ENCODE measurements at regions of chrX and their contacts with region 1.

Region 1: GRCh38 chrX:101931488-101932248 is at the start of gene ZMAT1:
- DNase-seq: peak; percentile 85 to 94 (median 89)
- H3K4me3 ChIP-seq: peak within 1 kb of the TSS in 1 of 2 donors; percentile 45
- H3K4me3 Mint-ChIP-seq: peak within 1 kb of the TSS; percentile 81 to 93 (median 88)
- H3K27ac ChIP-seq: peak within 1 kb of the TSS; percentile 66
- H3K27ac Mint-ChIP-seq: peak within 1 kb of the TSS; percentile 94 to 99 (median 95)
- H3K4me1 ChIP-seq: peaks cover 8% of the 10 kb centered on the region
- H3K4me1 Mint-ChIP-seq: peaks cover 6 to 18% (median 16%) of the 10 kb centered on the region in 4 donors
- H3K27me3 ChIP-seq: no peaks in the 10 kb centered on the region
- H3K27me3 Mint-ChIP-seq: peaks cover 0 to 2% of the 10 kb centered on the region in 2 donors
- total RNA-seq, gene ZMAT1: 39.1 to 40.0 TPM

Region 2: GRCh38 chrX:101390664-101391525 is 540.8 kb before region 1 on chrX and contains the start of gene RPL36A:
- CTCF ChIA-PET with region 1: no interaction called
- POLR2A ChIA-PET with region 1: interaction called, 18 read pairs
- intact Hi-C with region 1: loop called (anchors 5 kb)
- DNase-seq: peak; percentile 72 to 84 (median 76)
- H3K4me3 ChIP-seq: peak within 1 kb of the TSS; percentile 47 to 82
- H3K4me3 Mint-ChIP-seq: peak within 1 kb of the TSS; percentile 88 to 98 (median 93)
- H3K27ac ChIP-seq: peak within 1 kb of the TSS; percentile 68
- H3K27ac Mint-ChIP-seq: peak within 1 kb of the TSS; percentile 89 to 98 (median 96)
- H3K4me1 ChIP-seq: peaks cover 15% of the 10 kb centered on the region
- H3K4me1 Mint-ChIP-seq: peaks cover 10 to 39% (median 15%) of the 10 kb centered on the region in 4 donors
- H3K27me3 ChIP-seq: no peaks in the 10 kb centered on the region
- H3K27me3 Mint-ChIP-seq: no peaks in the 10 kb centered on the region
- total RNA-seq, gene RPL36A: 380 to 428 TPM

Region 3: GRCh38 chrX:101415180-101416145 is 516.2 kb before region 1 on chrX:
- CTCF ChIA-PET with region 1: no interaction called
- POLR2A ChIA-PET with region 1: interaction called, 15 read pairs
- intact Hi-C with region 1: no loop called
- DNase-seq: peak; percentile 50 to 70 (median 69)
- H3K4me3 ChIP-seq: no peak overlapping the region
- H3K4me3 Mint-ChIP-seq: peak overlapping the region; percentile 1 to 80 (median 56)
- H3K27ac ChIP-seq: peak overlapping the region; percentile 42
- H3K27ac Mint-ChIP-seq: peak overlapping the region; percentile 78 to 92 (median 82)
- H3K4me1 ChIP-seq: peaks cover 35% of the 10 kb centered on the region
- H3K4me1 Mint-ChIP-seq: peaks cover 20 to 60% (median 37%) of the 10 kb centered on the region in 4 donors
- H3K27me3 ChIP-seq: no peaks in the 10 kb centered on the region
- H3K27me3 Mint-ChIP-seq: no peaks in the 10 kb centered on the region

Region 4: GRCh38 chrX:101530944-101531343 is 400.7 kb before region 1 on chrX:
- CTCF ChIA-PET with region 1: no interaction called
- POLR2A ChIA-PET with region 1: no interaction called
- intact Hi-C with region 1: no loop called
- DNase-seq: no peak
- H3K4me3 ChIP-seq: no peak overlapping the region
- H3K4me3 Mint-ChIP-seq: no peak overlapping the region
- H3K27ac ChIP-seq: no peak overlapping the region
- H3K27ac Mint-ChIP-seq: no peak overlapping the region
- H3K4me1 ChIP-seq: no peaks in the 10 kb centered on the region
- H3K4me1 Mint-ChIP-seq: no peaks in the 10 kb centered on the region
- H3K27me3 ChIP-seq: no peaks in the 10 kb centered on the region
- H3K27me3 Mint-ChIP-seq: no peaks in the 10 kb centered on the region

Region 5: DNA sequence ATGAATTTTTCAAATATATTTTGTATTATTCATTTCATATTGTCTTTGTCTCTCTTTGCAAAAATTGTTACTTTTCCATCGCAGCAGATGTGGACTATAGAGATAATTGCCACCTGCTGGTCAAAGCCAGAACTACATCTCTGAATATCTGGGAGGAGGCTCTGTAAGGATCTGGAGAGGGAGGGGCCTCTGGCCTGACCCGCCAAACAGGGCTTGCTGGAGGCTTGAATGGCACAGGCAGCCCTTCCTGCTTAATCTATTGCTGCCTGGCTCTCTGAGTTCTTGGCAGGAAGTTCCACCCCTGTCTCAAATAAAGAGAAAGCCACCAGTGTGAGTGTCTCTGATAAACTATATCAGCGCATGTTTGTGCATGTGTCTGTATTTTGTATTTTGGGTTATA is 132.3 kb before region 1 on chrX:
- CTCF ChIA-PET with region 1: no interaction called
- POLR2A ChIA-PET with region 1: no interaction called
- intact Hi-C with region 1: loop called (anchors 2 kb)
- DNase-seq: peak; percentile 78 to 87 (median 82)
- H3K4me3 ChIP-seq: no peak overlapping the region
- H3K4me3 Mint-ChIP-seq: peak overlapping the region in 5 of 8 donors; percentile 2 to 69 (median 65)
- H3K27ac ChIP-seq: no peak overlapping the region
- H3K27ac Mint-ChIP-seq: peak overlapping the region in 3 of 7 donors; percentile 35 to 54 (median 49)
- H3K4me1 ChIP-seq: no peaks in the 10 kb centered on the region
- H3K4me1 Mint-ChIP-seq: peaks cover 1 to 9% (median 6%) of the 10 kb centered on the region in 4 donors
- H3K27me3 ChIP-seq: no peaks in the 10 kb centered on the region
- H3K27me3 Mint-ChIP-seq: peaks cover 0 to 2% of the 10 kb centered on the region in 2 donors

Region 6: GRCh38 chrX:102155806-102156179 is 224.1 kb after region 1 on chrX and contains the start of gene BEX5:
- CTCF ChIA-PET with region 1: no interaction called
- POLR2A ChIA-PET with region 1: interaction called, 12 read pairs
- intact Hi-C with region 1: loop called (anchors 2 kb)
- DNase-seq: peak; percentile 60 to 83 (median 65)
- H3K4me3 ChIP-seq: peak within 1 kb of the TSS; percentile 57 to 74
- H3K4me3 Mint-ChIP-seq: peak within 1 kb of the TSS; percentile 96 to 100 (median 98)
- H3K27ac ChIP-seq: peak within 1 kb of the TSS; percentile 77
- H3K27ac Mint-ChIP-seq: peak within 1 kb of the TSS; percentile 98 to 100 (median 99)
- H3K4me1 ChIP-seq: peaks cover 8% of the 10 kb centered on the region
- H3K4me1 Mint-ChIP-seq: peaks cover 0 to 14% (median 10%) of the 10 kb centered on the region in 4 donors
- H3K27me3 ChIP-seq: no peaks in the 10 kb centered on the region
- H3K27me3 Mint-ChIP-seq: no peaks in the 10 kb centered on the region
- total RNA-seq, gene BEX5: 5.9 to 7.4 TPM